Heart right ventricle (tissue), 16 donors: ENCODE measurements at regions of chr17 and their contacts with region 1.

Region 1: GRCh38 chr17:75412455-75413317 is 7.2 kb upstream of the GRB2 start:
- DNase-seq: peak; percentile 30 to 61
- ATAC-seq: peak in 6 of 8 donors; percentile 58 to 77 (median 70)
- H3K4me3 ChIP-seq: peak overlapping the region in 4 of 10 donors; percentile 9 to 27 (median 22)
- H3K27ac ChIP-seq: no peak overlapping the region
- H3K4me1 ChIP-seq: peaks cover 0 to 19% (median 11%) of the 10 kb centered on the region in 9 donors
- H3K27me3 ChIP-seq: no peaks in the 10 kb centered on the region
- CTCF ChIP-seq: peak; percentile 50 to 88 (median 82)

Region 2: DNA sequence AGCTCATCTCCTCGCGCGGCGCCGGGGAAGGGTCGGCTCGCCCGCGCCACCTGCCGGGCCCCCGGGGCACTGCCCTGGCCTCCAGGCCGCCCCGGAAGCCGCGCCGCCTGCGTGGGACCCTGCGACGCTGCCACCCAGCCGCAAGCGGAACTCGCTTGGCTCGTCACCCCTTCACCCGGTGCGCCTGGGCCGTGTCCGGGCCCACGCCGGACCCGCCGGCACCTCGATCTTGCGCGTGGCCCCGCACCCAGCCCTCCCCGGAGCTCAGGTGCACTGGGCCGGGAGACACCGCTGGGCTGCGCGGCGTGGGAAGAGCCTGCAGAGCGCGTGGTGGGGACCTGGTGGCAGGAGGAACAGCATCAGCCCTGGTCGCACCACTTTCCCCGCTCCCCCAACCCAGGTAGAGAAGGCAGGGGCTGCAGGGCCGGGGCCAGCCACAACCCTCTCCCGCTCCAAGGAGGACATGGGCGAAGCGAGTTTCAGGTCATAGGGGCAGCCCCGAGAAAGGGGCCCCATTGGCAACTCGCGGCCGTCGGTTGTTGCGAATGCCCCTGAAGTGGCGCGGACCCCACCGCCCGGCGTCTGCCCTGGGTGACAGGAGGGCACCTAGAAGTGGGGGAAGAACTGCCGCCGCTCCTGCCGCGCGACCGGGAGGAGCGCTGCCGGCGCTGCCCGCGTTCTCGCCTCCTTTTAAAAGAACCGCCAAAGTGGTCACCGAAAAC is 141.3 kb before region 1 on chr17:
- intact Hi-C with region 1: loop called in 3 of 10 experiments (anchors 5 kb)
- DNase-seq: peak; percentile 78 to 83
- ATAC-seq: peak; percentile 60 to 90 (median 72)
- H3K4me3 ChIP-seq: peak overlapping the region; percentile 65 to 100 (median 96)
- H3K27ac ChIP-seq: peak overlapping the region; percentile 81 to 98 (median 91)
- H3K4me1 ChIP-seq: peaks cover 4 to 52% (median 37%) of the 10 kb centered on the region in 9 donors
- H3K27me3 ChIP-seq: no peaks in the 10 kb centered on the region
- CTCF ChIP-seq: peak; percentile 60 to 95 (median 81)

Region 3: DNA sequence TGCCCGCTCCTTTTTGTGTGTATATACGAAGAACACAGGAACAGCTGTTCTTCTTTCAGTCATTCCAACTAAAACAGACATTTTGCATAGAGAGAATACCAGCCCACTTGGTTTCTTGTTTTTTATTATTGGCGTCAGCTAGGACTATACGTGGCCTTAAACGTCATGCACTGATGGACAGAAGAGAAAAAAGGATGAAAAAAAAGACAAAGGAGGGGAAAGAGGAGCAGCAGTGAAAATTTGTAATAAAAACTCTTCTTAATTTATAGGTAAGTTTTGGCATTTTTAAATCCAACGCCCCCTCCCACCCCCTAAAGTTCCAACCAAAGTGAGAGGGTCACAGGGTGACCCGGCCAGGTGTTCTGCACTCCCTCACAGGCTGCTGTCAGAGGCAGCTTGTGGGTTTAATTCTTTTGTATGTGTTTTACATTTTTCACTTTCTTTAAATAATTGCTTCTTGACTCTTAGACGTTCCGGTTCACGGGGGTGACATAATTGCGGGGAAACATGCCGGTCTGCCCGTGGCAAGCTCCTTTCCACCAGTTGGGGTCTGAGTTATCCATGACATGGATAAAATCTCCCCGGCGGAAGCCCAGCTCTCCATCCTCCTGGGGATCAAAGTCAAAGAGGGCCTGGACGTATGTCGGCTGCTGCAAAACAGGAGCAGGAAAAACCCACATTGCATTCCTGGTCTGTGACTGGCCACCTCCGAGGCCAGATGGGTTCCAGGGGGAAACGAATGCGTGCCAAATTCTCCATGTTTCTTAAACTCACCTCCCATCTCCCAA is 92.6 kb before region 1 on chr17:
- intact Hi-C with region 1: loop called in 5 of 10 experiments (anchors 1 to 5 kb)
- DNase-seq: no peak
- ATAC-seq: no peak
- H3K4me3 ChIP-seq: no peak overlapping the region
- H3K27ac ChIP-seq: no peak overlapping the region
- H3K4me1 ChIP-seq: peaks cover 0 to 60% (median 6%) of the 10 kb centered on the region in 9 donors
- H3K27me3 ChIP-seq: no peaks in the 10 kb centered on the region
- CTCF ChIP-seq: no peak

Region 4: DNA sequence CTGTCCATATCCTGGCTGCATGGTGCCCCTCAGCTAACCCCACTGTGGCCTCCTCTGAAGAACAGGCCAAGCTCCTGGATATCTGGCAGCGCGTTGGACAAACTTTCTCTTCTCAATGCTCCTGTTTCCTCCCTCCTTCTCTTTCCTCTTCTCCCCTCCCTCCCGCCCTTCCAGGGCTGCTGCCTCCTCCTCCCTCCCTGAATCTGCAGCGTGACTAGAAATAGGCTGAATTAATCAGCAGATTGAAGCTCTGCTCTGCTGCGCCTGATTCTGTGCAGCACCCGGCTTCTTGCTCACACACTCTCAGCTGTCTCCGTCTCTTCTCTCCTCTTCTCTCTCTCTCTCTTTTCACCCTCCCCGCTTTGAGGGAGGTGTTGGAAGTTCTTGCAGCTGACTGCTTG is 63.6 kb after region 1 on chr17:
- intact Hi-C with region 1: no loop called
- DNase-seq: no peak
- ATAC-seq: peak; percentile 60 to 85 (median 76)
- H3K4me3 ChIP-seq: peak overlapping the region in 8 of 10 donors; percentile 8 to 44 (median 34)
- H3K27ac ChIP-seq: peak overlapping the region; percentile 57 to 90 (median 81)
- H3K4me1 ChIP-seq: peaks cover 28 to 80% (median 45%) of the 10 kb centered on the region in 9 donors
- H3K27me3 ChIP-seq: no peaks in the 10 kb centered on the region
- CTCF ChIP-seq: no peak

Region 5: DNA sequence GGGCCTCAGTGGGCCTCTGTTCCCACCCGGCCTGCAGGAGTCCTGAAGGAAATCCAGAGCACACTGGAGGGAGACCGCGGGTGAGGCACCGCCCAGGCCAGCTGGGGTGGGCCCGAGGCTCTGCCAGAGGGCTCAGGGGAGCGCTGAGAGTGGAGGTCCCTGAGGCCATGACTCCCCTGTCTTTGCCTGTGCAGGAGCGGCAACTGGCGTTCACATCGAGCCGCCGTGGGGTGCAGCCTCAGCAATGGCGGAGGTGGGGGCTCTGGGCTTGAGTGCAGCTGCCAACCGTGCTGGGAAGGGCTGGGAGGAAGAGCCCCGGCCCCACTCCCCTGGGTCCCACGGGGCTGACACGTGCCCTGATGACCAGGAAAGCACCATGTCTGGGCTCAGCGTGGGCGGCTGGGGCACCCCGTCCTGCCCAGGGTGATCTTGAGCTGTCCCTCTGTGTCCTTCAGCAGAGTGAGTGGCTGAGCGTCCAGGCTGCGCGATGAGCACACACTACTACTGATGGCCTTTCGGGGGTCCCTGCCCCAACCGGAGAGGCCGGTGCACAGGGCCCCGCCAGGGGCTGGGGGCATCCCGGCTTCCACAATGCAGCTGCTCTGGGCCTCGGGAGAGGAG is 161.8 kb after region 1 on chr17:
- intact Hi-C with region 1: no loop called
- DNase-seq: no peak
- ATAC-seq: no peak
- H3K4me3 ChIP-seq: no peak overlapping the region
- H3K27ac ChIP-seq: no peak overlapping the region
- H3K4me1 ChIP-seq: peaks cover 0 to 26% (median 9%) of the 10 kb centered on the region in 9 donors
- H3K27me3 ChIP-seq: no peaks in the 10 kb centered on the region
- CTCF ChIP-seq: no peak

Region 6: GRCh38 chr17:75749545-75750389 is 337.1 kb after region 1 on chr17:
- intact Hi-C with region 1: loop called in 1 of 10 experiments (anchors 10 kb)
- DNase-seq: peak; percentile 86 to 88
- ATAC-seq: peak; percentile 68 to 88 (median 78)
- H3K4me3 ChIP-seq: no peak overlapping the region
- H3K27ac ChIP-seq: no peak overlapping the region
- H3K4me1 ChIP-seq: peaks cover 7 to 36% (median 26%) of the 10 kb centered on the region in 9 donors
- H3K27me3 ChIP-seq: no peaks in the 10 kb centered on the region
- CTCF ChIP-seq: peak; percentile 95 to 98 (median 96)